ENCODE measurements at regions of chr1 and their contacts with region 1.

Region 1: DNA sequence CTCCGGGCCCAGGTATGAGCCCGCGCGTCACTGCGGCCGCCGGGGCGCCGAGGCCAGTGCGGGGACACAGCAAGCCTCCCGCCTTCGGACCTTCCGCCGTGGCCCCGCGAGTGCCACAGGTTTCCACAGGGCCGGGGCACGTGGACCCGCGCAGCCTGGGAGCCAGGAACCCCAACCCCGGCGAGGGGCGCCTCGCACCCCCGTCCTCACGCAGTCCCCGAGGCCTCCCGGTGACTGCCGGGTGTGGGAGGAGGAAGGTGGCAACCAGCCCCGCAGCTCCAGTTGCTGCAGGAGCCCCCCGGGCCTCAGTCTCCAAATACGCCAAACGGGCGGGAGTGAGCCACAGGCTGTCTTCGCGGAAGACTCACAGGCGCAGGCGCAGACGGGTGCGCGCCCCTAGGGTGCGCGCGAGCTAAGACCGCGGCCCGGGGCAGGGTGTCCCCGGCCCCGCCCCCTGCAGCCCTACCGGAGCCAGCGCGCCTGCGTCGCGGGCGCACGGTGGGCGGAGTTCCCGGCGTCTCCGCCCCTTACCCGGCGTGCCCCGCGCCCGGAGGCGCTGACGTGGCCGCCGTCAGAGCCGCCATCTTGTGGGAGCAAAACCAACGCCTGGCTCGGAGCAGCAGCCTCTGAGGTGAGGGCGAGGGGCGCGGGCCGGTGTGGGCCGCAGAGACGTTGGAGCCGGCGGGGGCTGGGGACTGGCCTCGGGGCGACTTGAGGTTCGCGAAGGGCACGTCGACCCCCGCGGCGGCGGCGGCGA is at the start of gene ARF1:
- DNase-seq: peak; percentile 98
- H3K4me3 Mint-ChIP-seq: peak within 1 kb of the TSS; percentile 98
- H3K27ac Mint-ChIP-seq: peak within 1 kb of the TSS; percentile 97
- H3K4me1 Mint-ChIP-seq: peaks cover 49% of the 10 kb centered on the region
- H3K27me3 Mint-ChIP-seq: no peaks in the 10 kb centered on the region
- CTCF ChIP-seq: no peak
- total RNA-seq, gene ARF1: 870 and 1,140 TPM in 2 replicates

Region 2: GRCh38 chr1:228004331-228004855 is 77.9 kb before region 1 on chr1:
- CTCF ChIA-PET with region 1: interaction called, 72 read pairs
- POLR2A ChIA-PET with region 1: interaction called, 114 read pairs
- intact Hi-C with region 1: no loop called
- DNase-seq: peak; percentile 82
- H3K4me3 Mint-ChIP-seq: no peak overlapping the region
- H3K27ac Mint-ChIP-seq: no peak overlapping the region
- H3K4me1 Mint-ChIP-seq: peaks cover 10% of the 10 kb centered on the region
- H3K27me3 Mint-ChIP-seq: peaks cover 37% of the 10 kb centered on the region
- CTCF ChIP-seq: peak; percentile 88

Region 3: DNA sequence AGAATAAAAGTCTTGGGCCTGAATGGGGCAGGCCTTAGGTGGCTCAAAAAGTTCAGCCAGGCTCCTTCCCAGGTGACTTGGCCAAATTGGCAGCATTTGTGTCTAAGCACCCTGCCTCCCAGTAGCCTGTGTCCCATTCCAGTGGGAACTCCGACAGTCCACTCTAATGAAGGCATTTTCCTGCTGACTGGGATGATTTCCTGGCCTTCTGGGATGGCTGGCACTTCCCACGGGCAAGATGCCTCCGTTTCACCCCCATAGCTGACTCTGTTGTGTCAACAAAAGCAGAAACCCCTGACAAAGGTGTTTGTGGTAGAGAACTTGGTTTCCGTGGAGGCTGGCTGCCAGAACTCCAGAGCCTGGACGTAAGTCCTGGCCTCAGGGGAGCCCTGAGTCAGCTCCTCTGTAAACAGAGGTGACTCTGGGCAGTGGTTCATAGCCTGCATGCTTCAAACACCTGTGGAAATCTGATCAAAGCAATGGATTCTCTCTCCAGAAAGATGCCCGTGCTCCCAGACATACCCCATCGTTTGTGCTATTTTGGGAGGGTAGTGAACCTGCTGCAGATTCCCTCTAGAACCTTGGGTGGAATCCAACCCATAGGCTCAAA is 38.9 kb before region 1 on chr1:
- CTCF ChIA-PET with region 1: no interaction called
- POLR2A ChIA-PET with region 1: interaction called, 33 read pairs
- intact Hi-C with region 1: no loop called
- DNase-seq: peak; percentile 99
- H3K4me3 Mint-ChIP-seq: no peak overlapping the region
- H3K27ac Mint-ChIP-seq: no peak overlapping the region
- H3K4me1 Mint-ChIP-seq: peaks cover 18% of the 10 kb centered on the region
- H3K27me3 Mint-ChIP-seq: no peaks in the 10 kb centered on the region
- CTCF ChIP-seq: no peak

Region 4: DNA sequence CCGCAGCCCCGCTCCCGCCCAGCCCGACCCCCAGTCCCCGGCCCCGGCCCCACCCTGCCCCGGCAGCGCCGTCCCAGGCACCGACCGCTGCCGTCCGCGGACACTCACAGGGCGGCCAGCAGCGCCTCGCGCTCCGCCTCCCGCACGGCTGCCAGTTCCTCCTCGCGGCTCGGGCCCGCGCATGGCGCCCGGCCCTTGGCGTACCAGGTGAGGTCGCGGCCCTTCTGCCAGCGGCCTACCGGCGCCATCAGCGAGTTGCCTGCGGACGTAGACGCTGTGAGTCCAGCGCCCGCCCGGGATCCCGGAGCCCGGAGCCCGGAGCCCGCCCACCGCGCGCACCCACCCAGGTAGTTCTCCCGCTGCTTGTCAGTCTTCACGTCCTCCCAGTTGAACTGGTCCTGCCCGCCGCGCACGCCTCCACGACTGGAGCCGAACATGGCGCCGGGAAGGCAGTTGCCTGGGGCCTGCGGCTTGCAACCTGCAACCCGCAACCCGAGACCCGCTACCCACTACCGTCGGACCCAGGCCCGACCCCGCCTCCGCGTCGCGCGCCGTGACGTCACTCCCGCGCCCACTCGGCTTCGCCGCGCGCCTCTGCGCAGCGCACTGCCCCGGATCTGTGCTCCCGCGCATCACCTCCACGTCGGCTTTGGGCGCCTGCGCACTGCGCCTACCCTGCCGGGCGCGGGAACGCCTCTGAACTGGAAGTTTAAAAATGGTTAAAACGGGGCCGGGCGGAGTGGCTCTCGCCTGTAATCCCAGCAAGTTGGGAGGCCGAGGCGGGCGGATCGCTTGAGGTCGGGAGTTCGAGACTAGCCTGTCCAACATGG is 20.7 kb after region 1 on chr1 and contains the start of gene C1orf35:
- CTCF ChIA-PET with region 1: interaction called, 12 read pairs
- POLR2A ChIA-PET with region 1: interaction called, 128 read pairs
- intact Hi-C with region 1: loop called (anchors 2 kb)
- DNase-seq: peak; percentile 98
- H3K4me3 Mint-ChIP-seq: peak within 1 kb of the TSS; percentile 87
- H3K27ac Mint-ChIP-seq: peak within 1 kb of the TSS; percentile 80
- H3K4me1 Mint-ChIP-seq: peaks cover 23% of the 10 kb centered on the region
- H3K27me3 Mint-ChIP-seq: no peaks in the 10 kb centered on the region
- CTCF ChIP-seq: no peak
- total RNA-seq, gene C1orf35: 48.9 and 49.2 TPM in 2 replicates

Region 5: GRCh38 chr1:228139944-228140656 is 57.8 kb after region 1 on chr1 and contains the start of gene GUK1:
- CTCF ChIA-PET with region 1: interaction called, 3 read pairs
- POLR2A ChIA-PET with region 1: interaction called, 42 read pairs
- intact Hi-C with region 1: no loop called
- DNase-seq: peak; percentile 100
- H3K4me3 Mint-ChIP-seq: peak within 1 kb of the TSS; percentile 99
- H3K27ac Mint-ChIP-seq: peak within 1 kb of the TSS; percentile 95
- H3K4me1 Mint-ChIP-seq: peaks cover 25% of the 10 kb centered on the region
- H3K27me3 Mint-ChIP-seq: peaks cover 29% of the 10 kb centered on the region
- CTCF ChIP-seq: peak; percentile 32
- total RNA-seq, gene GUK1: 495 and 510 TPM in 2 replicates

Measured in MCF 10A (cell line).